ENCODE measurements at regions of chr5 and their contacts with region 1.

Region 1: DNA sequence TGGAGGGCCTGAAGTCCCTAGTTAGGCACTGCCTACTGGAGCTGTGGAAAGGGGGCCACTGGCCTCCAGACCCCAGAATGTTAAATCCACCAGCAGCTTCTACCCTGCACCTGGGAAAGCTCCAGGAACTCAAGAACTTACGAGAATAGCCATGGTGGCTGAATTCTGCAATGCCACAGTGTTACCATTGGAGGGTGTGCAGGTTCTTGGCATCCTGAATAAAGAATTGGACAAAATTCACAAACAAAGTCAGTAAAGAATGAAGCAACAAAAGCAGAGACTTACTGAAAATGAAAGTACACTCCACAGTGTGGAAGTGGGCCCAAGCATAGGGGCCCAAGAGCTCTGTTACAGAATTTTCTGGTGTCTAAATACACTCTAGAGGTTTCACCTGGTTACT is 107.0 kb downstream of the PRDM9 start:
- DNase-seq: no peak
- H3K4me3 ChIP-seq: no peak overlapping the region
- CTCF ChIP-seq: no peak
- POLR2A ChIP-seq: no peak

Region 2: GRCh38 chr5:23655674-23656073 is 41.3 kb after region 1 on chr5:
- intact Hi-C with region 1: loop called (anchors 2 kb)
- DNase-seq: no peak
- H3K4me3 ChIP-seq: no peak overlapping the region
- CTCF ChIP-seq: no peak
- POLR2A ChIP-seq: no peak

Measured in lower leg skin (tissue), 4 donors.